ENCODE measurements at regions of chr2 and their contacts with region 1.

Region 1: DNA sequence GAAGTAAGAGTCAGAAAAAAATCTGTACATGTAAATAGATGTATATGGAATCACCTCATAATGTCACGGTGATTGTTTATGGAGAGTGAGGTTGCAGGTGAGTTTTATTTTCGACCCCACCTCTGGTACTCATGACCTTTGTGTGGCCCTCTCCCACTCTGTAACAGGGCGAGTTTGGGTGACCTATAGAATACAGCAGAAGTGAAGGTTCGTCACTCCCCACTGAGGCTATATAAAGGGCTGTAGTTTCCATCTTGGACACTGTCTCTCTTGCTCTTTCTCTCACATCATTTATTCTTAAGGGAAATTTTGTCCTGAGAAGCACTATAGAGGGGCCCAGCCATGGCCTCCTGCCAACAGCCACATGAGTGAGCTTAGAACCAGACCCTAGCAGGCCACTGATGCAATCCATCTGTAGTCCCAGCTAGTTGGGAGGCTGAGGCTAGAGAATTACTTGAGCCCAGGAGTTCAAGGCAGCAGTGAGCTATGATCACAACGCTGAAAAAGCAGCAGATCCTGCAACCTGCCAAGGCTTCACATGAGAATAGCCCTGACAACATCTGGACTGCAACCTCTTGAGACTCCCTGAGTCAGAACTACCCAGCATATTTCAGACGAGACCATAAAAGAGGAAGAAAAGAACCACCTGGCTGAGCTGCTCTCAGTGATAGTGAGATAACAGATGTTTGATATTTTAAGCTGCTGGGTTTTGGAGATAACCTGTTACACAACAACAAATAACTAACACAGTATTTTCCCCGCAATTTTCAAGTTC is 74.3 kb upstream of the SLC1A4 start:
- DNase-seq: no peak
- ATAC-seq: no peak
- H3K4me3 ChIP-seq: no peak overlapping the region
- H3K27ac ChIP-seq: no peak overlapping the region
- H3K4me1 ChIP-seq: no peaks in the 10 kb centered on the region
- CTCF ChIP-seq: no peak
- EP300 ChIP-seq: no peak
- POLR2A ChIP-seq: no peak
- RAD21 ChIP-seq: no peak

Region 2: DNA sequence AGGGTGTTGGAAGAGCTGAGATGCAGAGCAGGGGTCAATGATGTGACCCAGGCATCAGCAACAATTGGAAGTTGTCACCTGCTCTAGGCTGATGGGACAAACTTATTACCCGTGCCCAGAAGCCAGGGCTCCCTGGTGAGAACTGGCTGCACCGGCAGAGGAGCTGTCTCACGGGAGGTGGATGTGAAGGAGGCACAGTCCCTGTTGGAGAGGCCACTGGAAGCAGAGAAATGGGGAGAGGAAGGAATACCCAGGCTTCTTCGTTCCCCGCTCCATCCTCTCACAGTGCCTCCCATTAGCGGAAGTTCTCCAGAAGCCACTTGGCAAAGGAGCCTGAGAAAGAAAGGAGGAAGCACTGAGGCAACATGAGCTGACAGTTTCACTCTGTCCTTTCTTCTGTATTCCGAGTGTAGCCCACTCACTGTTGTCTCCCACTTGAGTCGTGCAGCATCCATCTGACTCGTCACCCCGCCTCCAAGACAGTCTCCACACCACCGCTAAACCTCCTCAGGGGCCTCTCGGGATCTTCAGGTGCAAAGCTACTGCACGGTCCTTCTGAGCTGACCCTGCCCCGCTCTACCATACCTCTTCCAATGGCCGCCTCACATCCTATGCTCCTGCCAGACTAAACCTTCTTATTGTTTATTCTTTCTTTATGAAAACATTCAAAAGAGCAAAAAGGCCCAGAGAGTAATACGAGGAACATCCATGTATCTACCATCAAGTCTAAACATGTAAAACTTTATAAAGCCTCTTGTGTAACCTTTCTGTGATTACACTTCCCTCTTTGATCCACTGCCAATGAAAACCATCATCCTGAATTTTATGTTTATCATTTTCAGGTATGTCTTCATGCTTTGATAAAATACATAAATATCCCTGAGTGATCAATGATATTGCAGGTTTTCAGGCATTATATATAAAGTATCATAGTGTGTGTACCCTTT is 409.9 kb before region 1 on chr2:
- CTCF ChIA-PET with region 1: no interaction called
- POLR2A ChIA-PET with region 1: no interaction called
- DNase-seq: no peak
- ATAC-seq: no peak
- H3K4me3 ChIP-seq: no peak overlapping the region
- H3K27ac ChIP-seq: no peak overlapping the region
- H3K4me1 ChIP-seq: no peaks in the 10 kb centered on the region
- CTCF ChIP-seq: no peak
- EP300 ChIP-seq: no peak
- POLR2A ChIP-seq: no peak
- RAD21 ChIP-seq: no peak

Region 3: GRCh38 chr2:64819774-64820696 is 94.9 kb before region 1 on chr2:
- CTCF ChIA-PET with region 1: no interaction called
- POLR2A ChIA-PET with region 1: no interaction called
- DNase-seq: no peak
- ATAC-seq: no peak; a peak in 1 of 6 replicates
- H3K4me3 ChIP-seq: no peak overlapping the region
- H3K27ac ChIP-seq: no peak overlapping the region
- H3K4me1 ChIP-seq: no peaks in the 10 kb centered on the region
- CTCF ChIP-seq: no peak
- EP300 ChIP-seq: no peak
- POLR2A ChIP-seq: no peak
- RAD21 ChIP-seq: no peak

Region 4: GRCh38 chr2:64899081-64899865 is 15.6 kb before region 1 on chr2:
- CTCF ChIA-PET with region 1: interaction called, 76 read pairs
- POLR2A ChIA-PET with region 1: no interaction called
- DNase-seq: no peak
- ATAC-seq: no peak
- H3K4me3 ChIP-seq: no peak overlapping the region
- H3K27ac ChIP-seq: no peak overlapping the region
- H3K4me1 ChIP-seq: no peaks in the 10 kb centered on the region
- CTCF ChIP-seq: no peak
- EP300 ChIP-seq: no peak
- POLR2A ChIP-seq: no peak
- RAD21 ChIP-seq: no peak

Region 5: GRCh38 chr2:64937687-64938491 is 23.0 kb after region 1 on chr2:
- CTCF ChIA-PET with region 1: interaction called, 10 read pairs
- POLR2A ChIA-PET with region 1: no interaction called
- DNase-seq: no peak
- ATAC-seq: no peak
- H3K4me3 ChIP-seq: no peak overlapping the region
- H3K27ac ChIP-seq: no peak overlapping the region
- H3K4me1 ChIP-seq: peaks cover 3% of the 10 kb centered on the region
- CTCF ChIP-seq: no peak
- EP300 ChIP-seq: no peak
- POLR2A ChIP-seq: no peak
- RAD21 ChIP-seq: no peak

Region 6: GRCh38 chr2:64978514-64979268 is 63.8 kb after region 1 on chr2:
- CTCF ChIA-PET with region 1: interaction called, 10 read pairs
- POLR2A ChIA-PET with region 1: no interaction called
- DNase-seq: peak in 1 of 2 experiments; percentile 37
- ATAC-seq: peak; percentile 62 to 70
- H3K4me3 ChIP-seq: no peak overlapping the region
- H3K27ac ChIP-seq: no peak overlapping the region
- H3K4me1 ChIP-seq: peaks cover 48% of the 10 kb centered on the region
- CTCF ChIP-seq: peak; percentile 34; the same call in 2 of the 3 replicates
- EP300 ChIP-seq: no peak
- POLR2A ChIP-seq: no peak
- RAD21 ChIP-seq: peak; percentile 12 to 26; a peak in 1 of 5 replicates

Region 7: DNA sequence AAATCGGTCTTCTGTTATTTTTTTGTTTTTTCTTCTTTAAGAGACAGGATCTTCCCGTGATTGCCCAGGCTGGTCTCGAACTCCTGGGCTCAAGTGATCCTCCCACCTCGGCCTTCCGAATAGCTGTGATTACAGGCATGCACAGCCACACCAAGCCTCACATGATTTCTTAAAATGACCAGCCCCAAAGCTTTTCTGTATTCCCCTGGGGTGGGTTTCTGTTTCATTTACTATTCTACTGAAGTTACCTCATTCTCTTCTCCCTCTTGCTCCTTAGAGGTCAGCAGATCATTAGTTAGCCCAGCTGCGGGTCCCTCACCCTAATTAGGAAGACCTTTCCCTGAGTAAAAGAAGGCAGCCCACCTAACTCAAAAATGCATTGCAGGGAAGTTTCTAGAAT is 101.9 kb after region 1 on chr2:
- CTCF ChIA-PET with region 1: interaction called, 39 read pairs
- POLR2A ChIA-PET with region 1: no interaction called
- DNase-seq: no peak
- ATAC-seq: no peak
- H3K4me3 ChIP-seq: no peak overlapping the region
- H3K27ac ChIP-seq: no peak overlapping the region
- H3K4me1 ChIP-seq: no peaks in the 10 kb centered on the region
- CTCF ChIP-seq: no peak
- EP300 ChIP-seq: no peak
- POLR2A ChIP-seq: no peak
- RAD21 ChIP-seq: no peak

Region 8: GRCh38 chr2:65040400-65041261 is 125.7 kb after region 1 on chr2:
- CTCF ChIA-PET with region 1: interaction called, 246 read pairs
- POLR2A ChIA-PET with region 1: interaction called, 6 read pairs
- DNase-seq: peak; percentile 90
- ATAC-seq: peak; percentile 98 to 99
- H3K4me3 ChIP-seq: no peak overlapping the region
- H3K27ac ChIP-seq: peak overlapping the region in 1 of 2 experiments; percentile 59; a peak in 3 of 6 replicates
- H3K4me1 ChIP-seq: no peaks in the 10 kb centered on the region
- CTCF ChIP-seq: peak; percentile 96
- EP300 ChIP-seq: no peak
- POLR2A ChIP-seq: no peak
- RAD21 ChIP-seq: peak; percentile 96 to 98

Region 9: DNA sequence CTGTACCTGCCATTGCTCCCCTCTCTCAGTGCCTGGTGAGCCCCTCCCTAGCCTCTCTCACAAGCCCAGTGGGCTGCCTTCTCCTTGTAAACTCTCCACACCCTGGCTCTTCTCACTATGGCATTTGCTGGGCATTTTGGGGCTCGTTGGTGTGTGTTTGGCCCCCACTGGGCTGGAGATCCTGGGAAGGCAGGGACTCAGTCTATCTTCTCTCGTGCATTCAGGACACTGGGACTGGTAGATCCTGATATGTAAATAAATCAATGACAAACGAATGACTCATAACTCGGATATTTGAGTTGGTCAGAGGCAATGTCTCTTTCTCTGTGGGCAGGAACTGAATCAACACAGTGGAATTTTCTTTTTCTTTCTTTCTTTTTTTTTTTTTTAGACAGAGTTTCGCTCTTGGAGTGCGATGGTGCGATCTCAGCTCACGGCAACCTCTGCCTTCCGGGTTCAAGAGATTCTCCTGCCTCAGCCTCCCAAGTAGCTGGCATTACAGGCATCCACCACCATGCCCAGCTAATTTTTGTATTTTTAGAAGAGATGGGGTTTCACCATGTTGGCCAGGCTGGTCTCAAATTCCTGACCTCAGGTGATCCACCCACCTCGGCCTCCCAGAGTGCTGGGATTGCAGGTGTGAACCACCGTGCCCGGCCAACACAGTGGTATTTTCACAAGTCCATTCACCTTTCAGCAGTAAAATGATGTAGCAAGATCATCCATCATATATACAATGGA is 662.1 kb after region 1 on chr2:
- CTCF ChIA-PET with region 1: interaction called, 12 read pairs
- POLR2A ChIA-PET with region 1: no interaction called
- DNase-seq: peak; percentile 82 to 91
- ATAC-seq: peak; percentile 92 to 95
- H3K4me3 ChIP-seq: peak overlapping the region; percentile 21; the same call in 2 of the 3 replicates
- H3K27ac ChIP-seq: peak overlapping the region; percentile 79 to 88
- H3K4me1 ChIP-seq: peaks cover 28% of the 10 kb centered on the region
- CTCF ChIP-seq: no peak
- EP300 ChIP-seq: 0 out of 5 replicates have a peak, but pooled peaks of 1 of the 2 experiments have one; percentile 27
- POLR2A ChIP-seq: no peak
- RAD21 ChIP-seq: no peak

Measured in A549 (cell line).